T-cell (primary cell): ENCODE measurements at regions of chr1 and their contacts with region 1.

Region 1: GRCh38 chr1:67535474-67535873 is 105.3 kb upstream of the SERBP1 start:
- DNase-seq: peak in 26 of 35 experiments; percentile 4 to 46 (median 14)
- ATAC-seq: no peak
- H3K4me3 ChIP-seq: no peak overlapping the region
- H3K4me3 Mint-ChIP-seq: no peak overlapping the region
- H3K27ac ChIP-seq: no peak overlapping the region
- H3K27ac Mint-ChIP-seq: no peak overlapping the region
- H3K4me1 ChIP-seq: no peaks in the 10 kb centered on the region
- H3K4me1 Mint-ChIP-seq: no peaks in the 10 kb centered on the region
- H3K27me3 ChIP-seq: peaks cover 0 to 3% of the 10 kb centered on the region in 2 experiments
- H3K27me3 Mint-ChIP-seq: no peaks in the 10 kb centered on the region

Region 2: GRCh38 chr1:67515324-67516080 is 20.0 kb before region 1 on chr1:
- CTCF ChIA-PET with region 1: interaction called, 3 to 6 read pairs
- POLR2A ChIA-PET with region 1: interaction called in 1 of 2 experiments, 14 read pairs
- DNase-seq: no peak
- ATAC-seq: no peak
- H3K4me3 ChIP-seq: no peak overlapping the region
- H3K4me3 Mint-ChIP-seq: no peak overlapping the region
- H3K27ac ChIP-seq: no peak overlapping the region
- H3K27ac Mint-ChIP-seq: no peak overlapping the region
- H3K4me1 ChIP-seq: no peaks in the 10 kb centered on the region
- H3K4me1 Mint-ChIP-seq: no peaks in the 10 kb centered on the region
- H3K27me3 ChIP-seq: peaks cover 0 to 4% of the 10 kb centered on the region in 2 experiments
- H3K27me3 Mint-ChIP-seq: peaks cover 0 to 1% of the 10 kb centered on the region in 2 donors

Region 3: GRCh38 chr1:67524143-67525052 is 11.1 kb before region 1 on chr1:
- CTCF ChIA-PET with region 1: interaction called in 1 of 2 experiments, 24 read pairs
- POLR2A ChIA-PET with region 1: no interaction called
- DNase-seq: no peak
- ATAC-seq: no peak
- H3K4me3 ChIP-seq: no peak overlapping the region
- H3K4me3 Mint-ChIP-seq: no peak overlapping the region
- H3K27ac ChIP-seq: no peak overlapping the region
- H3K27ac Mint-ChIP-seq: no peak overlapping the region
- H3K4me1 ChIP-seq: peaks cover 0 to 2% of the 10 kb centered on the region in 2 experiments
- H3K4me1 Mint-ChIP-seq: no peaks in the 10 kb centered on the region
- H3K27me3 ChIP-seq: peaks cover 0 to 7% of the 10 kb centered on the region in 2 experiments
- H3K27me3 Mint-ChIP-seq: peaks cover 13 to 14% of the 10 kb centered on the region in 2 donors

Region 4: GRCh38 chr1:67760030-67760821 is 224.8 kb after region 1 on chr1:
- CTCF ChIA-PET with region 1: interaction called, 12 to 18 read pairs
- POLR2A ChIA-PET with region 1: no interaction called
- DNase-seq: peak in 31 of 35 experiments; percentile 14 to 76 (median 47)
- ATAC-seq: peak; percentile 51 to 59 (median 54)
- H3K4me3 ChIP-seq: no peak overlapping the region
- H3K4me3 Mint-ChIP-seq: no peak overlapping the region
- H3K27ac ChIP-seq: no peak overlapping the region
- H3K27ac Mint-ChIP-seq: no peak overlapping the region
- H3K4me1 ChIP-seq: no peaks in the 10 kb centered on the region
- H3K4me1 Mint-ChIP-seq: no peaks in the 10 kb centered on the region
- H3K27me3 ChIP-seq: peaks cover 0 to 2% of the 10 kb centered on the region in 2 experiments
- H3K27me3 Mint-ChIP-seq: peaks cover 20 to 22% of the 10 kb centered on the region in 2 donors